ENCODE measurements at regions of chr15 and their contacts with region 1.

Region 1: DNA sequence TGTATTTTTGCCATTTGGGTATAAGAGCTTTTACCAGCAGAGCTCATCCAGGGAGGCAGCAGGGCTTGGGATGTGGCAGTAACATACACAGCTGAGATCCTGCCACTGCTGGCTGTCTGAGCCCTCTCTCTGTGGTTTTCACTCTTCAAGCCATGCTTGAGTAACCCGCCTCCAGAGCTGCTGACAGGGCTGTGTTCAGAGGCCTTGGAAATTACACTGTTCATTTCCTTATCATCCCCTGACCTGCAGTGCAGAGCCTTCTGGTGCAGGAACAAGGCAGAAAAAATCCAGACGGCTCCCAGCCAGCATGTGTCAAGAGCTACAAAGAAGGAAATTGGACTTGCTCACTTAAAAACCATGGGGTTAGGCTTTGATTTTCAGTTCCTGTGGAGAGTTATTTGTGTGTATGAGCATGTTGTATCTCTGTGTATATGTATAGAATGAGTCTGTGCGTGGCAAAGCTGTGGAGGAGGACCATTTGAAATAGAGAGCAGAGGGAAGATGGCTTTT is 47.0 kb downstream of the ZNF609 start:
- DNase-seq: no peak
- ATAC-seq: no peak
- H3K4me3 ChIP-seq: no peak overlapping the region
- H3K27ac ChIP-seq: no peak overlapping the region
- H3K4me1 ChIP-seq: no peaks in the 10 kb centered on the region
- H3K27me3 ChIP-seq: no peaks in the 10 kb centered on the region
- CTCF ChIP-seq: no peak

Region 2: GRCh38 chr15:64162870-64163658 is 344.3 kb before region 1 on chr15 and contains the start of gene PPIB:
- CTCF ChIA-PET with region 1: no interaction called
- POLR2A ChIA-PET with region 1: interaction called, 16 read pairs
- intact Hi-C with region 1: no loop called
- DNase-seq: peak; percentile 95
- ATAC-seq: peak; percentile 95
- H3K4me3 ChIP-seq: peak within 1 kb of the TSS; percentile 86
- H3K27ac ChIP-seq: peak within 1 kb of the TSS; percentile 56
- H3K4me1 ChIP-seq: peaks cover 11% of the 10 kb centered on the region
- H3K27me3 ChIP-seq: no peaks in the 10 kb centered on the region
- CTCF ChIP-seq: peak; percentile 48
- total RNA-seq, gene PPIB: 410 and 450 TPM in 2 replicates

Region 3: DNA sequence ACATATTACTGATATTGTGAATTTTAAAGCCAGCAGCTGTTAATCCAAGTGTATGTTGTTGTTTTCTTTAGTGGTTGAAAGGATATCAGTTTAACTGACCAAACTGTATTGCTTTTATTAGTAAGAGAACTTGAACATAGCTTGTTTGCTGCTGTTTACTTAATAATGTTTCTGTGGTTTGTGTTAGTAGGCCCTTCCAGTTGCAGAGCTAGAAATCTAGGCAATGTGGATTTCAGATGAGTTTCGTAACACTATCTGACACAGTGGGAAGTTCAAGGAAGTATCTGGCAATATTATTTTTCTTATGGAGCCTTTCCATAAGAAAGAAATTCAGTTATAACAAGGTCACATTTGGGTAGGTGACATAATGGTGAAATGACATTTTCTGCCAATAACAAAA is 28.5 kb before region 1 on chr15:
- CTCF ChIA-PET with region 1: no interaction called
- POLR2A ChIA-PET with region 1: no interaction called
- intact Hi-C with region 1: loop called (anchors 1 kb)
- DNase-seq: no peak
- ATAC-seq: no peak
- H3K4me3 ChIP-seq: no peak overlapping the region
- H3K27ac ChIP-seq: no peak overlapping the region
- H3K4me1 ChIP-seq: no peaks in the 10 kb centered on the region
- H3K27me3 ChIP-seq: no peaks in the 10 kb centered on the region
- CTCF ChIP-seq: no peak

Measured in PC-3 (cell line).